T-cell (primary cell): ENCODE measurements at regions of chr16 and their contacts with region 1.

Region 1: GRCh38 chr16:11639925-11640899 is 28.0 kb upstream of the SNN start:
- DNase-seq: peak in 5 of 35 experiments; percentile 14 to 53 (median 33)
- ATAC-seq: peak in 1 of 4 experiments; percentile 18
- H3K4me3 ChIP-seq: no peak overlapping the region
- H3K4me3 Mint-ChIP-seq: no peak overlapping the region
- H3K27ac ChIP-seq: no peak overlapping the region
- H3K27ac Mint-ChIP-seq: peak overlapping the region in 1 of 2 donors; percentile 48
- H3K4me1 ChIP-seq: peaks cover 4 to 17% of the 10 kb centered on the region in 2 experiments
- H3K4me1 Mint-ChIP-seq: peaks cover 15 to 31% (median 25%) of the 10 kb centered on the region in 3 donors
- H3K27me3 ChIP-seq: no peaks in the 10 kb centered on the region
- H3K27me3 Mint-ChIP-seq: no peaks in the 10 kb centered on the region

Region 2: GRCh38 chr16:11530171-11530940 is 109.9 kb before region 1 on chr16:
- CTCF ChIA-PET with region 1: interaction called, 15 to 25 read pairs
- POLR2A ChIA-PET with region 1: no interaction called
- DNase-seq: no peak
- ATAC-seq: no peak
- H3K4me3 ChIP-seq: no peak overlapping the region
- H3K4me3 Mint-ChIP-seq: no peak overlapping the region
- H3K27ac ChIP-seq: no peak overlapping the region
- H3K27ac Mint-ChIP-seq: no peak overlapping the region
- H3K4me1 ChIP-seq: peaks cover 0 to 16% of the 10 kb centered on the region in 2 experiments
- H3K4me1 Mint-ChIP-seq: peaks cover 6 to 12% (median 9%) of the 10 kb centered on the region in 3 donors
- H3K27me3 ChIP-seq: peaks cover 0 to 4% of the 10 kb centered on the region in 2 experiments
- H3K27me3 Mint-ChIP-seq: peaks cover 0 to 7% of the 10 kb centered on the region in 2 donors

Region 3: DNA sequence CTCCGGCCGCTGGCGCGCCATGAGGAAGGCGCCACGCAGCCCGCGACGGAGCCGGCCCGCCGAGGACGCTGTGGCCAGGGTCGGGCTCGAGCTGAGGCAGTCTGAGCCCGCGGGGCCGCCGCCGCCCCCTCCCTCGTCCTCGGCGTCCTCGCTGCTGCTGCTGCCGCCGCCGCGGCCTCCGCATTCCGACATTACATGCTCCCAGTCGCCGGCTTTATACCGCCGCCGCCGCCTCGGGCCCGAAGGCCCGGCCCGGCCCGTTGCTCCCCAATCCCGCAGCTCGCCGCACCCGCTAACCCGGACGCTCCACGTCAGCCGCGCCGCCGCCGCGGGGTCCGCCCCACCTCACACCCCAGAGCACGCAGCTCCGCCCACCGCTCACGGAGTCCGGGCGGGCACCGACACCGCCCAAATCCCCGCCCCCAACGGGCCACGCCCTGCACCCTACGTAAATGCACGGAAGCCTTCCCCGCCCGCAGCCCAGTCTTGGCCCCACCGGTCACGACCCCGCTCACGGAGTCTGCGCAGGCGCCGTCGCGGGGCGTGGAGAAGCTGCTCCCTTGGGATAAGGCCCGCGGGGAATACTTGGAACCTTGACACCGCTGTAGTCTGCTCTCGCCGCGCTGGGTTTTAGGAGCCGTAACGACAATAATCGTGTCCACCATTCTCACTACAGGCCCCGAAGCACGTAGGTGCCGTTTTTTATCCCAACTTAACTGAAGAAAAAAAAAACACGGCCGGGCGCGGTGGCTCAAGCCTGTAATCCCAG is 102.5 kb after region 1 on chr16 and contains the start of gene TXNDC11:
- CTCF ChIA-PET with region 1: no interaction called
- POLR2A ChIA-PET with region 1: interaction called in 1 of 2 experiments, 14 read pairs
- DNase-seq: peak; percentile 96 to 100 (median 99)
- ATAC-seq: peak; percentile 91 to 97 (median 93)
- H3K4me3 ChIP-seq: peak within 1 kb of the TSS; percentile 62 to 86
- H3K4me3 Mint-ChIP-seq: peak within 1 kb of the TSS; percentile 90 to 96 (median 94)
- H3K27ac ChIP-seq: peak within 1 kb of the TSS; percentile 97
- H3K27ac Mint-ChIP-seq: peak within 1 kb of the TSS; percentile 93 to 96
- H3K4me1 ChIP-seq: peaks cover 5 to 47% of the 10 kb centered on the region in 2 experiments
- H3K4me1 Mint-ChIP-seq: peaks cover 51 to 57% (median 53%) of the 10 kb centered on the region in 3 donors
- H3K27me3 ChIP-seq: no peaks in the 10 kb centered on the region
- H3K27me3 Mint-ChIP-seq: no peaks in the 10 kb centered on the region
- total RNA-seq, gene TXNDC11: 44.0 to 76.3 (median 54.0) TPM